ENCODE measurements at regions of chr14 and their contacts with region 1.

Region 1: DNA sequence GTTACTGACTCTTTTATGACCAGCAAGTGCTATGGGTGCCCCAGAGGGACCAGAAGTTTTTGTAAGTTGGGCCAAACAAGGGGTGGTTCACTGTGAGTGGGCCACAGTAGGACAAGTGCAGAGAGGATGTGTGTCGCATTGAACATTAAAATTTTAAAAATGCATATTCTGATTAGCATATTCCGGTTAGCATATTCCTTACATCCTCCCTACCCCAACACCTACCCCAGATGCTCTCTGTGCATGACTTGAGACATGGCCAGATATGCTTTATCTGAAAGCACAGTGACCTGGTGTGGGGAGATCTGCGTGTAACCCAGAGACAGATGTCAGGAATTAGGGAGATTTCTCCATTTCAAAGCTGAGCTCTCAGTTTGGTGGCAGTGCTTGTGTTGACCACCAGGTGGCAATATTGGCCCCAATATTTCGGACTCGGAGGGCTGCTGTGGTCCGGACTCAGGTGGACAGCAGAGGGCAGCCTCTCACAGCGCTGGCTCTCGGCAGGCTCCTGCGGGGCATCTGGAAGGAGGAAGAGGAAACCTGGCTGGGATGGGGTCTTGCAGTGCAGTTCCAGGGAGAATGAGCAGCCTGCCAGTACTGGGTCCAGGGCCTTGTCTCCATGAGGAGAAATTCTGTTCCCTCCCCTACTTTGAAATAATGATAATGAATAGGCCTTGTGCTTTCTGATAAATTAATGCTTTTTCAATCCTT is 1.6 kb upstream of the CEBPE start:
- DNase-seq: peak; percentile 73
- H3K4me3 Mint-ChIP-seq: no peak overlapping the region
- H3K27ac Mint-ChIP-seq: peak overlapping the region; percentile 64
- H3K4me1 Mint-ChIP-seq: peaks cover 17% of the 10 kb centered on the region
- H3K27me3 Mint-ChIP-seq: no peaks in the 10 kb centered on the region

Region 2: GRCh38 chr14:23141671-23142451 is 21.2 kb after region 1 on chr14:
- intact Hi-C with region 1: no loop called
- DNase-seq: no peak
- H3K4me3 Mint-ChIP-seq: no peak overlapping the region
- H3K27ac Mint-ChIP-seq: no peak overlapping the region
- H3K4me1 Mint-ChIP-seq: peaks cover 13% of the 10 kb centered on the region
- H3K27me3 Mint-ChIP-seq: no peaks in the 10 kb centered on the region

Region 3: DNA sequence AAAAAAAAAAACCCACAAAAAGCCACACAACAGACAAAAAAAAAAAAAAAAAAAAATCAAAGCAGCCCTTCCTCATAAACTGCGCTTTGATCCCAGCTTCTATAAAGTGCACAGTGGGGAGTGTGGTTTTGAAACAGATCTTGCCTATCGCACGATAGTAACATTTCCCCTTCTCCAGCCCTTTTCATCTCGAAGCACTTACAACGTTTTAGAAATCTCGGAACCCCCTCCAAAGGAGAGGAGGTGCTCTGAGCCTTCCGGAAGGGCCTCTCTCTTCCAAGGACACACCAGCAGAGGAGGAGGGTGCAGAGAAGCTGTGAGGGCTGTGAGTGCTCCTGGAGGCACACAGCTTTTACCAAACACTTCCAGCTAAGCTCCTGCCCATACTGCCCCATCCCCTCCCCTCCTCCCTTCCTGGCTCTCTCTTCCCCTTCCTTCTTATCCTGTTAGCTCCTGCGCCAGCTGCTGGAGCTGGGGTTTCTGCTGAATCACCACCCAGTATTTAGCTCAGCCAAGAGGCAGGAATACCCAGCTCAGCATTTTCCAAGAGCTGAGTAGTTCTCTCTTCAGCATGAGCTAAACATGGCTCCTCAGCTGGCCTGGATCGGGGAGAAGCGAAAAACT is 34.4 kb after region 1 on chr14:
- intact Hi-C with region 1: loop called (anchors 5 kb)
- DNase-seq: no peak
- H3K4me3 Mint-ChIP-seq: no peak overlapping the region
- H3K27ac Mint-ChIP-seq: no peak overlapping the region
- H3K4me1 Mint-ChIP-seq: peaks cover 12% of the 10 kb centered on the region
- H3K27me3 Mint-ChIP-seq: no peaks in the 10 kb centered on the region

Region 4: DNA sequence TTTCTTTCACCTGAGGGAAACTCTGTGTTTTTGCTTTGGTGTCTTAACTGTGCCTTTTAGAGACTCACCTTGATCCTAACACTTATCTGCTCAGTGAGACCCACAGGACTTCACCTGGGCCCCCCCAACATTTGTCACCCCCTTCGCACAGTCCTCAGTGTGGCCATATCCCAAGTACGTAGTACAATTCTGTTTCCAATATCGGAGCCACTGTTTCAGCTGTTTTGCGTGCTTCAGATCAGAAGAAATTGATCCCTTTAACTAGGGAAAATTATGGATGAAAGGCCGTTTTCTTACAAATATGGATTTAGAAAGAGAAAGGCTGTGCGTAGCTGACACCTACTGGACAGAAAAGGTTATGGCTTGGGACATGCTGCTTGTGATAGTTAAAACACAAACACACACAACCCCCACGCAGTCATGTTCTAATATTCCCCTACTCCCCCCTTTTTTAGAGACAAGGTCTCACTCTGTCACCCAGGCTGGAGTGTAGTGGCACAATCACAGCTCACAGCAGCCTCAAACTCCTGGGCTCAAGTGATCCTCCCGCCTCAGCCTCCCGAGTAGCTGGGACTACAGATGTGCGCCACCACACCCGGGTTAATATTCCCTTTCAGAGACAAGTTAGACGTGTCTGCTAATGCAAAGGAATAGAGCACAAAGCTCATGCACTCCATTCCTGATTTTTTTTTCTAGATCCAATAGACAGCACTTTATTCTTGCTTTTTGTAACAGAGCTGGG is 66.4 kb after region 1 on chr14:
- intact Hi-C with region 1: loop called (anchors 1 kb)
- DNase-seq: no peak
- H3K4me3 Mint-ChIP-seq: no peak overlapping the region
- H3K27ac Mint-ChIP-seq: no peak overlapping the region
- H3K4me1 Mint-ChIP-seq: peaks cover 2% of the 10 kb centered on the region
- H3K27me3 Mint-ChIP-seq: peaks cover 7% of the 10 kb centered on the region

Measured in activated T-helper 2 cell treated with anti-CD3 and anti-CD28 coated beads, Interferon-gamma antibody, Interleukin-2, Interleukin-4, amounts not matched to agents 10 μg/mL and 5 μg/mL and 100 μg/mL, durations not matched to agents 14 hours and 24 hours and 36 hours (primary cell).